CD8-positive, alpha-beta memory T cell (primary cell): ENCODE measurements at regions of chr11 and their contacts with region 1.

Region 1: GRCh38 chr11:62671575-62672389 is at the starts of genes LBHD1 and UQCC3:
- DNase-seq: peak; percentile 56 to 85 (median 79)
- H3K4me3 ChIP-seq: peak within 1 kb of the TSS; percentile 82
- H3K4me3 Mint-ChIP-seq: peak within 1 kb of the TSS; percentile 94 to 100 (median 100)
- H3K27ac ChIP-seq: peak within 1 kb of the TSS; percentile 91
- H3K27ac Mint-ChIP-seq: peak within 1 kb of the TSS; percentile 83 to 98 (median 97)
- H3K4me1 ChIP-seq: peaks cover 36% of the 10 kb centered on the region
- H3K4me1 Mint-ChIP-seq: peaks cover 36 to 61% (median 52%) of the 10 kb centered on the region in 3 donors
- H3K27me3 ChIP-seq: no peaks in the 10 kb centered on the region
- H3K27me3 Mint-ChIP-seq: no peaks in the 10 kb centered on the region
- total RNA-seq, gene LBHD1: 22.6 to 22.9 TPM
- total RNA-seq, gene UQCC3: 7.1 to 7.5 TPM

Region 2: DNA sequence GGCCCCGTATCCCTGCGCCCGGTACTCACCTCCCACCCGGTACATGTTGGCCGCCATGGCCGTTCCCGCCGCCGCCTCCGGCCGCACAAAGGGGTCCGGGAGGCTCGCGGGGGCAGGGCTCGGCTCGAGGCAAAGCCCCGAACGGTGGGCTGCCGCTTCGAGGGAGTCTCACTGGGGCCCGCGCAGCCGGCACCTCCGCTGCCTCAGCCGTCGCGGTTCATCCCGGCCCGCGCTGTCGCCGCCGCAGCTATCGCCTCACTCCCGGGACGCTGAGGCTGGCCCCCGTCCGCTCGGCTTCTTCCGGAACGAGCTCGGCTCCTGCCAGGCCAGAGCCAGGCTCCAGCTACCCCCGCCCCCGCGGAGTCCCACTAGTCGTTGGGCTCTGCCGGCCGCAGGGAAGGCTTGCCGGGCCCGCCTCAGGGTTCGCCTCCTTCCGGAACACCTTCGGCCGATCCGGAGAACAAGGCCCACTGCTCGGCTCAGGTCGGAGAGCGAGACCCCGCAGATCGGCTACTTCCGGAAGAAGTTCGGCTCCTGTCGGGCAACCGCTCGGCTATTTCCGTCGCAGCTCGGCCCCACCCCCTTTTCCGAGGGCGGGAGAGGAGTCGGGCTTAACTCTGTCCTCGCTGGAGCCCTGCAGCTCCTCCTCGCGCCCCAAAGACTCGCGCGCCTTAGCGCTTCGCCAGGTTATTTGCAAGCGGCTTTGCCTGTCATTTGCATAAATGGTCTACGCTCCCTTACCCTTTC is 70.2 kb before region 1 on chr11 and contains the start of gene MTA2:
- CTCF ChIA-PET with region 1: interaction called, 4 read pairs
- POLR2A ChIA-PET with region 1: interaction called, 24 read pairs
- DNase-seq: peak; percentile 98 to 100 (median 99)
- H3K4me3 ChIP-seq: peak within 1 kb of the TSS; percentile 89
- H3K4me3 Mint-ChIP-seq: peak within 1 kb of the TSS; percentile 91 to 97 (median 93)
- H3K27ac ChIP-seq: peak within 1 kb of the TSS; percentile 86
- H3K27ac Mint-ChIP-seq: peak within 1 kb of the TSS; percentile 93 to 98 (median 96)
- H3K4me1 ChIP-seq: peaks cover 29% of the 10 kb centered on the region
- H3K4me1 Mint-ChIP-seq: peaks cover 49 to 69% (median 52%) of the 10 kb centered on the region in 3 donors
- H3K27me3 ChIP-seq: no peaks in the 10 kb centered on the region
- H3K27me3 Mint-ChIP-seq: peaks cover 0 to 5% of the 10 kb centered on the region in 2 donors
- total RNA-seq, gene MTA2: 248 to 263 TPM

Region 3: DNA sequence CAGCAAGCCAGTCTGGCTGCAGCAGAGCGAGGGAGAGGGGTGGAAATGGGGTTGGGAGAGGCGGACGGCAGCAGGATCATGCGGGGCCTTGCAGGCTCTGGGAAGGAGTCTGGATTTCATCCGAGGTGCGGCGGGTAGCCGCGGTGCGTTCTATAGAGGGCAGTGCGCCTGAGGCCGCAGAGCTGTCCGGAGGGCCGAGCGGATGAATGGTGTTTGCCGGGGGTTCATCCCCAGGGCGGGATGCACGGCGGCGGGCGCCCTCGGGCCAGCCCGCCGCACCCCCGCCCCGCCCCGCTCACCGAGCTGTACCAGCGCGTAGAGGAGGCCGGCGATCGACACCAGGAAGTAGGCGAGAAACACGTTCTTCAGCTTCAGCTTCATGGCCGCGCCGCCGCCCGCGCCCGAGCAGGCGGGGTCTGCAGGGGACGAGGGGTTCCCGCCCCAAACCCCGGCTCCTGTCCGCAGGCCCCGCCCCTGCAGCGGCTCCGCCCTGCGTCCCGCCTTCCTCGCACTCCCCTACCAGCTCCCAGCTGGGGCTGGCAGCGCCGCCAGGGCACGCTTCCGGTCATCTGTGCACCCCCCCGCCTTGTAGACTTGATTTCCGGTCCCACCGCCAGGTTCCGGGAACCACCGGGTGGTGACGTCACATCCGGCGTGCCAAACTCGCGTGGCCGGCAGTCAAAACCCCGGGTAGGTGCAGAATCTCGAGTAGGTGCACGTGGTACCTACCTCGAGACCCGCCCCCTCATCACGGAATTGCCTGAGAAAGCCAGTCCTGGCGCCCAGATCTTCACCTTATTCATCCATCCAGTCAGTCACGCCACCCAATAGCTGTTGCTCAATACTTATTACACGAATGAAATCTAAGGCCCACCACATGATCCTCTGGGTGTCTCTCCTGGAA is 50.0 kb before region 1 on chr11 and contains the start of gene B3GAT3:
- CTCF ChIA-PET with region 1: interaction called, 4 read pairs
- POLR2A ChIA-PET with region 1: interaction called, 12 read pairs
- DNase-seq: peak; percentile 95 to 98 (median 97)
- H3K4me3 ChIP-seq: peak within 1 kb of the TSS; percentile 94
- H3K4me3 Mint-ChIP-seq: peak within 1 kb of the TSS; percentile 90 to 96 (median 94)
- H3K27ac ChIP-seq: peak within 1 kb of the TSS; percentile 80
- H3K27ac Mint-ChIP-seq: peak within 1 kb of the TSS; percentile 89 to 100 (median 97)
- H3K4me1 ChIP-seq: peaks cover 16% of the 10 kb centered on the region
- H3K4me1 Mint-ChIP-seq: peaks cover 15 to 28% (median 26%) of the 10 kb centered on the region in 3 donors
- H3K27me3 ChIP-seq: no peaks in the 10 kb centered on the region
- H3K27me3 Mint-ChIP-seq: peaks cover 0 to 1% of the 10 kb centered on the region in 2 donors
- total RNA-seq, gene B3GAT3: 67.4 to 68.2 TPM

Region 4: GRCh38 chr11:62652161-62653006 is 19.4 kb before region 1 on chr11:
- CTCF ChIA-PET with region 1: interaction called, 8 read pairs
- POLR2A ChIA-PET with region 1: interaction called, 52 read pairs
- DNase-seq: peak in 1 of 5 donors; percentile 65
- H3K4me3 ChIP-seq: peak overlapping the region; percentile 83
- H3K4me3 Mint-ChIP-seq: peak overlapping the region; percentile 85 to 95 (median 91)
- H3K27ac ChIP-seq: peak overlapping the region; percentile 87
- H3K27ac Mint-ChIP-seq: peak overlapping the region; percentile 80 to 97 (median 86)
- H3K4me1 ChIP-seq: peaks cover 15% of the 10 kb centered on the region
- H3K4me1 Mint-ChIP-seq: peaks cover 15 to 29% (median 20%) of the 10 kb centered on the region in 3 donors
- H3K27me3 ChIP-seq: no peaks in the 10 kb centered on the region
- H3K27me3 Mint-ChIP-seq: peaks cover 0 to 7% of the 10 kb centered on the region in 2 donors

Region 5: GRCh38 chr11:62705880-62706849 is 34.4 kb after region 1 on chr11:
- CTCF ChIA-PET with region 1: interaction called, 4 read pairs
- POLR2A ChIA-PET with region 1: interaction called, 12 read pairs
- DNase-seq: peak; percentile 92 to 98 (median 95)
- H3K4me3 ChIP-seq: peak overlapping the region; percentile 88
- H3K4me3 Mint-ChIP-seq: peak overlapping the region; percentile 86 to 95 (median 89)
- H3K27ac ChIP-seq: peak overlapping the region; percentile 95
- H3K27ac Mint-ChIP-seq: peak overlapping the region; percentile 92 to 99 (median 94)
- H3K4me1 ChIP-seq: peaks cover 48% of the 10 kb centered on the region
- H3K4me1 Mint-ChIP-seq: peaks cover 36 to 49% (median 41%) of the 10 kb centered on the region in 3 donors
- H3K27me3 ChIP-seq: no peaks in the 10 kb centered on the region
- H3K27me3 Mint-ChIP-seq: no peaks in the 10 kb centered on the region